Activated CD4-positive, alpha-beta T cell treated with anti-CD3 and anti-CD28 coated beads for 36 hours (primary cell): ENCODE measurements at regions of chr14 and their contacts with region 1.

Region 1: DNA sequence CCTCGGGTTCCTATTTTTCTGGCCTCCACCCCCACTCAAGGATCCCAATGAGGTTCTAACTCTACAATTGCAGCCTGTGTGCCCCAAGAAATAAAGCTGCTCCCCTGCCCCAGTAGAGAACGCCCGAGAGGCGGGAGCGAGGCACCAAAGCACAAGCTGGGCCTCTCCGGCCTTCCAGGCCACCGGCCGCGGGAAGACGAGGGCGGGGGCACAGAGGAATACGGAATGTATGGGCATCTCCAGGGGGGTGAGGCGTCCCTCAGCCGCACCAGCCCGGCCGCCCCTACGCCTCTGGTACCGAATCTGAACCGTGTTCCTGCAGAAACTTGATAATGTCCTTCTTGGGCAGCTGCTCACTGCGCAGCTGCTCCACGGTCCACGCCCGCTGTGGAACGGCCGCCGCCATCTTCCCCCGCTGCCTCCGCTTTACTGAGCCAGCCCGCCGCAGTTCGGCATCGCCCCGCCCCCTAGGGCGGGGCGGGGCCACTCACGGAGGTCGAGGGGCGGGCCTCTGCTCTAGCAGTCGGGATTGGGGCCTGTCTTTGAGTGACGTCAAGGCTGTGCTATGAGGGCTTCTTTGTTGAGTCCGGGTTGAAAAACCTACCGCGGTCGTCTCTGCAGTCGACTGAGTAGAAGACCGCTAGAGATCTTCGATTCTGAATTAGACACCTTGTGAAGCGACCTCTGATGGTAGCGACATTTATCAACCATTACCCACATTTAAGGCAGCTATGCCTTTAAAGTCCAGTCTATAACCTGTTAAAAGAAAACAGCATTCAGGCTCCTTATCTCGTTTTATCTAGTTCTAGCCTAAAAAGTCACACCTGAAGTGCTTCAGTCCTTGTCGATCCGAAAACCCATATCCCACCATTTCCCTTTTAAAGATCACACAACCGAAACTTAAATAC is at the start of gene FKBP3:
- DNase-seq: peak; percentile 97
- ATAC-seq: peak; percentile 94
- H3K4me3 Mint-ChIP-seq: peak within 1 kb of the TSS; percentile 93
- H3K27ac Mint-ChIP-seq: peak within 1 kb of the TSS; percentile 99
- H3K4me1 Mint-ChIP-seq: peaks cover 34% of the 10 kb centered on the region
- H3K27me3 Mint-ChIP-seq: no peaks in the 10 kb centered on the region
- total RNA-seq, gene FKBP3: 70.5 to 73.9 TPM

Region 2: GRCh38 chr14:44041700-44042099 is 1092.6 kb before region 1 on chr14:
- CTCF ChIA-PET with region 1: no interaction called
- POLR2A ChIA-PET with region 1: no interaction called
- intact Hi-C with region 1: no loop called
- DNase-seq: no peak
- ATAC-seq: no peak
- H3K4me3 Mint-ChIP-seq: no peak overlapping the region
- H3K27ac Mint-ChIP-seq: no peak overlapping the region
- H3K4me1 Mint-ChIP-seq: no peaks in the 10 kb centered on the region
- H3K27me3 Mint-ChIP-seq: no peaks in the 10 kb centered on the region

Region 3: GRCh38 chr14:44912041-44912869 is 222.1 kb before region 1 on chr14:
- CTCF ChIA-PET with region 1: no interaction called
- POLR2A ChIA-PET with region 1: no interaction called
- intact Hi-C with region 1: loop called (anchors 5 kb)
- DNase-seq: no peak
- ATAC-seq: peak; percentile 12
- H3K4me3 Mint-ChIP-seq: no peak overlapping the region
- H3K27ac Mint-ChIP-seq: no peak overlapping the region
- H3K4me1 Mint-ChIP-seq: no peaks in the 10 kb centered on the region
- H3K27me3 Mint-ChIP-seq: peaks cover 27% of the 10 kb centered on the region

Region 4: GRCh38 chr14:45083971-45084722 is 50.2 kb before region 1 on chr14 and contains the start of gene PRPF39:
- CTCF ChIA-PET with region 1: interaction called, 3 read pairs
- POLR2A ChIA-PET with region 1: no interaction called
- intact Hi-C with region 1: loop called (anchors 1 kb)
- DNase-seq: peak; percentile 97
- ATAC-seq: peak; percentile 96
- H3K4me3 Mint-ChIP-seq: peak within 1 kb of the TSS; percentile 93
- H3K27ac Mint-ChIP-seq: peak within 1 kb of the TSS; percentile 97
- H3K4me1 Mint-ChIP-seq: peaks cover 45% of the 10 kb centered on the region
- H3K27me3 Mint-ChIP-seq: no peaks in the 10 kb centered on the region
- total RNA-seq, gene PRPF39: 45.2 to 47.5 TPM

Region 5: GRCh38 chr14:45112889-45113781 is 21.2 kb before region 1 on chr14:
- CTCF ChIA-PET with region 1: interaction called, 15 read pairs
- POLR2A ChIA-PET with region 1: interaction called, 7 read pairs
- intact Hi-C with region 1: loop called (anchors 1 kb)
- DNase-seq: no peak
- ATAC-seq: peak; percentile 70
- H3K4me3 Mint-ChIP-seq: no peak overlapping the region
- H3K27ac Mint-ChIP-seq: peak overlapping the region; percentile 72
- H3K4me1 Mint-ChIP-seq: peaks cover 29% of the 10 kb centered on the region
- H3K27me3 Mint-ChIP-seq: no peaks in the 10 kb centered on the region

Region 6: DNA sequence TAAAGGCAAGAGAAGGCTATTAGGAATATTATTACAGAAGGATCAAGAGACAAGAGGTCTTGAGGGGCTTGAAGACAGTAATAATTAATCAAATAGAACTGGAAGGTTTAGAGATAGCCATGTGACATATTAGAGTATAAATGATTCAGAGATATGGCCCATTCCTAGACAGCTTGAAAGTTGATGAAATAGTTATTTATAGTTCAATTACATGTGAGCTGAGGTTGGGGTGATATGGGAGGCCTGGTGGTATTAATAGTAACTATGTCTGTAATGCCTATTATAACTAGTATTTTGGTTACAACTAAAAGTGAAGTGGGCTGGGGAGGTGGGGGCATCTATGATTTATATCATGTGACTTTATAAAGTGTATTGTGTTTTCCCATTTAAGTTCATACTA is 132.8 kb after region 1 on chr14:
- CTCF ChIA-PET with region 1: interaction called, 4 read pairs
- POLR2A ChIA-PET with region 1: no interaction called
- intact Hi-C with region 1: loop called in 1 of 2 experiments (anchors 5 kb)
- DNase-seq: no peak
- ATAC-seq: no peak
- H3K4me3 Mint-ChIP-seq: no peak overlapping the region
- H3K27ac Mint-ChIP-seq: no peak overlapping the region
- H3K4me1 Mint-ChIP-seq: no peaks in the 10 kb centered on the region
- H3K27me3 Mint-ChIP-seq: peaks cover 5% of the 10 kb centered on the region

Region 7: DNA sequence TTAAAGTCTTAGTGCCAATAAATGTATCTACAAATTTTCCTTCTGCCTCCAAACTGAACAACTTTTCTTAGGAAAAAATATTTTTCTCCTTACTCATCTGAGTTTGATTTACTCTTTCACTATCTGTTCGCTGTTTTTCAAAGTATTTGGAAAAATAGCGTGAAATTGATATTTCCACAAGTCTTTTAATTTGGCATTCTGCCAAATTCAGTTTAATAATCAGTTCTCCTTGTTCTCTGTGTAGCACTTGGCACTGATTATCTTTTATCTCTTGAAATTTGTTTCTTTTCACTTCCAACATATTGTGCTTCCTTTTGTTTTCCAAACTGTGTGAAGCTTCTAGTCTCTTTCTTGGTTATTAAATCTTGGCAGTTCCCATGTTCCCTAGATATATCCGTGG is 957.5 kb after region 1 on chr14:
- CTCF ChIA-PET with region 1: no interaction called
- POLR2A ChIA-PET with region 1: no interaction called
- intact Hi-C with region 1: no loop called
- DNase-seq: no peak
- ATAC-seq: no peak
- H3K4me3 Mint-ChIP-seq: no peak overlapping the region
- H3K27ac Mint-ChIP-seq: no peak overlapping the region
- H3K4me1 Mint-ChIP-seq: no peaks in the 10 kb centered on the region
- H3K27me3 Mint-ChIP-seq: no peaks in the 10 kb centered on the region